Panc1 (cell line): ENCODE measurements at regions of chr14 and their contacts with region 1.

Region 1: DNA sequence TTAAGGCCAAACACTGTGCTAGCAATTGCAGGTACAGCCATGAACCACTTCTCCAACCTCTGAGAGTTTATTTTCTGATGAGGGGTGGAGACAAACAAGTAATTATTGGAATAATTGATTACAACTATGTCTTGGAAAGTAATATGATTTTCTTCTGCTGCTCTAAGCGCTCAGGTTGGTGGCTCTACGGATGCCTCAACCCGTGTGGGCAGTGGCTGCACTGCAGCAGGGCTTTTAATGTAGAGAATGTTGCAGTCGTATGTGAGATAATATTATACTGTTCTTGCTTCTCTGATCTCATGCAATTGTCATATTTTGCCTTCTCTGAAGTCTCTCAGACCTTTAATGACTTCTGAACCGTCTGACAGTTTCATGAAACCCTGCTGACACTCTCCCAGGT is 14.1 kb downstream of the SLC8A3 start:
- DNase-seq: no peak
- ATAC-seq: no peak
- H3K4me3 ChIP-seq: no peak overlapping the region
- H3K27ac ChIP-seq: no peak overlapping the region
- H3K4me1 ChIP-seq: no peaks in the 10 kb centered on the region
- H3K27me3 ChIP-seq: peaks cover 3% of the 10 kb centered on the region
- CTCF ChIP-seq: no peak

Region 2: GRCh38 chr14:70139384-70139783 is 35.3 kb before region 1 on chr14:
- CTCF ChIA-PET with region 1: no interaction called
- POLR2A ChIA-PET with region 1: interaction called, 11 read pairs
- in situ Hi-C with region 1: no loop called
- intact Hi-C with region 1: no loop called
- DNase-seq: no peak
- ATAC-seq: no peak
- H3K4me3 ChIP-seq: no peak overlapping the region
- H3K27ac ChIP-seq: no peak overlapping the region
- H3K4me1 ChIP-seq: no peaks in the 10 kb centered on the region
- H3K27me3 ChIP-seq: no peaks in the 10 kb centered on the region
- CTCF ChIP-seq: no peak